Naive thymus-derived CD8-positive, alpha-beta T cell (primary cell): ENCODE measurements at regions of chr21 and their contacts with region 1.

Region 1: GRCh38 chr21:45292399-45293219 is 4.9 kb upstream of the POFUT2 start:
- DNase-seq: peak; percentile 54 to 79 (median 69)
- ATAC-seq: peak; percentile 59 to 62
- H3K4me3 Mint-ChIP-seq: peak overlapping the region in 9 of 10 donors; percentile 16 to 70 (median 64)
- H3K27ac Mint-ChIP-seq: peak overlapping the region; percentile 63 to 91 (median 77)
- H3K4me1 Mint-ChIP-seq: peaks cover 10 to 38% (median 32%) of the 10 kb centered on the region in 4 donors
- H3K27me3 Mint-ChIP-seq: peaks cover 0 to 8% (median 0%) of the 10 kb centered on the region in 5 donors

Region 2: DNA sequence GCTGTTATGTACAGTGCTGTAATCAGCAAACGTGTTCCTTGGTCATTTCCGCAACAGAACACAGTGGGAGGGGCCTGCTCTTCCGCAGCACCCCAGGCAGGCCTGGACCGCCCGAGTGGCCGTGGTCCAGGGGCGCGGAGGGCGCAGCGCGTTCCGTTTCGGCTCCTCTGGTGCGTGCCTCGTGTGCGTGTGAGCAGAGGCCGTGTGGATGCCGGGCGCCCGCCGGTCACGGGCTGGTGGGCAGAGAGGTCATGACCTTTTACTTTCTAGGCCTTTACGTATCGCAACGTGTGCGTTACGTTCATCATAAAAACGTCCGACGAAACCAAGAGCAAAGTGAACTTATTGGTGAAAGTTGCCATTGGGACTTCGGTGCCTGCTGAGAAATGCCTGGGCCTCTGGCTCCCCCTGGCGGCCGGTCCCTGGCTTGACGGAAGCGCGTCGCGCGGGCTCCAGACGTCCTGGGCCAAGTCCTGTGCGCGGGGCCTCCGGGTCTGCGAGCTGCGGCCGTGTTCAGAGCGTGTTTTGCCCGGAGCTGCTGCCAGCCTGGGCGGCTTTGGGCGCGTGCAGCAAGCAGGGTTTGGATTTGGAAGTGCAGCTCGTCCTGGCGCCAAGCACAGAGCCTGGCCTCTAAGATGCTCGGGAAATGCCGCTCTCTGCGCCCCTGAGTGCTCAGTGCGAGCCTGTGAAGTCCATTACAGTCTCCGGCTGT is 146.7 kb after region 1 on chr21:
- POLR2A ChIA-PET with region 1: interaction called, 12 read pairs
- DNase-seq: peak; percentile 66 to 89 (median 84)
- ATAC-seq: peak; percentile 89 to 95
- H3K4me3 Mint-ChIP-seq: peak overlapping the region; percentile 56 to 77 (median 70)
- H3K27ac Mint-ChIP-seq: peak overlapping the region; percentile 41 to 90 (median 82)
- H3K4me1 Mint-ChIP-seq: peaks cover 4 to 20% (median 10%) of the 10 kb centered on the region in 4 donors
- H3K27me3 Mint-ChIP-seq: peaks cover 0 to 11% (median 5%) of the 10 kb centered on the region in 5 donors